ENCODE measurements at regions of chr7 and their contacts with region 1.

Region 1: GRCh38 chr7:25093268-25093826 is 31.7 kb downstream of the CYCS start:
- DNase-seq: peak; percentile 88
- H3K4me3 Mint-ChIP-seq: no peak overlapping the region
- H3K27ac Mint-ChIP-seq: no peak overlapping the region
- H3K4me1 Mint-ChIP-seq: peaks cover 14% of the 10 kb centered on the region
- H3K27me3 Mint-ChIP-seq: peaks cover 2% of the 10 kb centered on the region

Region 2: GRCh38 chr7:24290004-24290641 is 803.2 kb before region 1 on chr7:
- CTCF ChIA-PET with region 1: no interaction called
- POLR2A ChIA-PET with region 1: no interaction called
- intact Hi-C with region 1: loop called (anchors 5 kb)
- DNase-seq: peak; percentile 76
- H3K4me3 Mint-ChIP-seq: no peak overlapping the region
- H3K27ac Mint-ChIP-seq: no peak overlapping the region
- H3K4me1 Mint-ChIP-seq: peaks cover 14% of the 10 kb centered on the region
- H3K27me3 Mint-ChIP-seq: peaks cover 39% of the 10 kb centered on the region

Region 3: GRCh38 chr7:24504040-24504439 is 589.3 kb before region 1 on chr7:
- CTCF ChIA-PET with region 1: no interaction called
- POLR2A ChIA-PET with region 1: no interaction called
- intact Hi-C with region 1: no loop called
- DNase-seq: no peak
- H3K4me3 Mint-ChIP-seq: no peak overlapping the region
- H3K27ac Mint-ChIP-seq: no peak overlapping the region
- H3K4me1 Mint-ChIP-seq: no peaks in the 10 kb centered on the region
- H3K27me3 Mint-ChIP-seq: peaks cover 6% of the 10 kb centered on the region

Region 4: GRCh38 chr7:24715661-24716479 is 377.5 kb before region 1 on chr7:
- CTCF ChIA-PET with region 1: interaction called, 12 read pairs
- POLR2A ChIA-PET with region 1: no interaction called
- intact Hi-C with region 1: no loop called
- DNase-seq: no peak
- H3K4me3 Mint-ChIP-seq: no peak overlapping the region
- H3K27ac Mint-ChIP-seq: no peak overlapping the region
- H3K4me1 Mint-ChIP-seq: no peaks in the 10 kb centered on the region
- H3K27me3 Mint-ChIP-seq: peaks cover 17% of the 10 kb centered on the region

Region 5: DNA sequence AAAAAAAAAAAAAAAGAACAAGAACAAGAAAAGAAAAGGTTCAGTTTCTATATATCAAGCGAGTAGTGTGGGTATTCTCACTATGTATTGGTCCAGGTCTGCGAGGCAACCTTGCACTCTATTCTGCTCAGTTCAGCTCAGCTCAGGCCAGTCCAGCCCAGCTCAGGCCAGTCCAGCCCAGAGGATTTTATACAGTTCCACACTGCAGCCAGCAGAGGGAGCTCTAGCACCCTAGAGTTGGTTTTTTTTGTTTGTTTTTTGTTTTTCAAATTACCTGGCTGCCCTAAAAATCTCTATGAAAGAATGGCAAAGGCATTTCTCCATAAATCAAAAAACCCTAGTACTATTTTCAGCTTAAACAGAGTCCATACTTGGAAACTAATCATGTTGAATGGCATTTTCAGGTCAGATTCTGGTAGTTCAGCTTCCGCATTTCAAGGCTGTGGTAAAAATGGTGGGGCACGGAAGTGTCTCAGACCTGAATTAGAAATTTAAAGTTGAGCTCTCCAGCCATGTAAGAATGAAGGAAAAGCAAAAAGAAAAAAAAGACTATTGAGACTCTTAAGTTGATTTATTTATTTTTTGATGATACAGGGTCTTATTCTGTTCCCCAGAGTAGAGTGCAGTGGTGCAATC is 280.9 kb before region 1 on chr7:
- CTCF ChIA-PET with region 1: interaction called, 251 read pairs
- POLR2A ChIA-PET with region 1: no interaction called
- intact Hi-C with region 1: loop called (anchors 1 kb)
- DNase-seq: peak; percentile 58
- H3K4me3 Mint-ChIP-seq: no peak overlapping the region
- H3K27ac Mint-ChIP-seq: no peak overlapping the region
- H3K4me1 Mint-ChIP-seq: no peaks in the 10 kb centered on the region
- H3K27me3 Mint-ChIP-seq: no peaks in the 10 kb centered on the region

Region 6: DNA sequence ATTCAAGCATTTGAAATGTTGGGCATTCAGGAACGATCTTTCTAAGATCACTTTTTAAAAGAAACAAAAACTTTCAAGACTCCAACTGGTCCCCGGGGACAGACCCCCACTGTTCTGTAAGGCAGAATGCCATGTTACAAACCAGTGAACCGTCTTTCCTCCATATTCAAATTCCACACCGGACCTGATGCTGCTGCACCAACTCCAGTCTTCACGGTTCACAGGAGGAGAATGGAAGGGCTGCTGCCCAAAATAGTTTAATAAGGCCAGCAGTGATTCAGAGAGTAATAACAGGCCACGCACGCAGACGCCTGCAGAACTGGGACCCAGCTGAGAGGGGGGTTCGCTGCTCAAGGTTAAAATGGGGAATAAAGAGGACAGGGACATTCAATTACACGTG is 160.5 kb before region 1 on chr7:
- CTCF ChIA-PET with region 1: no interaction called
- POLR2A ChIA-PET with region 1: no interaction called
- intact Hi-C with region 1: no loop called
- DNase-seq: no peak
- H3K4me3 Mint-ChIP-seq: no peak overlapping the region
- H3K27ac Mint-ChIP-seq: no peak overlapping the region
- H3K4me1 Mint-ChIP-seq: peaks cover 58% of the 10 kb centered on the region
- H3K27me3 Mint-ChIP-seq: no peaks in the 10 kb centered on the region

Region 7: DNA sequence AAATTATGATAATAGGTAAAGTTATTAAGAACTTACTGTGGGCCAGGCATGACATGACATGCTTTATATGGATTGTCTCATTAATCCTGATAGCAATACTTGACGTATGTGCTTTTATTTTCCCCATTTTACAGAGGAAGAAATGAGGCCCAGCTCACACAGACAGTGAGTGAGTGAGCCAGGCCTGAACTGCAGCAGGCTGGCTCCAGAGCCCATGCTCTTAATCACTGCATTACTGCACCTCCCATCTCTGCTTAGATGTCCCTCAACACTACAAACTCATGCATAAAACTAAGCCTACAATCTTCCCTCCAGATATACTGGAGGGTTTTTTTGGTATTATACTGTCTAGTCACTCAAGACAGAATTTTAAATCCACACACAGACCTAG is 44.9 kb before region 1 on chr7:
- CTCF ChIA-PET with region 1: no interaction called
- POLR2A ChIA-PET with region 1: no interaction called
- intact Hi-C with region 1: no loop called
- DNase-seq: no peak
- H3K4me3 Mint-ChIP-seq: no peak overlapping the region
- H3K27ac Mint-ChIP-seq: no peak overlapping the region
- H3K4me1 Mint-ChIP-seq: no peaks in the 10 kb centered on the region
- H3K27me3 Mint-ChIP-seq: no peaks in the 10 kb centered on the region

Region 8: GRCh38 chr7:25069900-25070443 is 23.4 kb before region 1 on chr7:
- CTCF ChIA-PET with region 1: interaction called, 33 read pairs
- POLR2A ChIA-PET with region 1: no interaction called
- intact Hi-C with region 1: no loop called
- DNase-seq: peak; percentile 45
- H3K4me3 Mint-ChIP-seq: no peak overlapping the region
- H3K27ac Mint-ChIP-seq: no peak overlapping the region
- H3K4me1 Mint-ChIP-seq: peaks cover 26% of the 10 kb centered on the region
- H3K27me3 Mint-ChIP-seq: no peaks in the 10 kb centered on the region

Region 9: GRCh38 chr7:25158966-25159365 is 65.6 kb after region 1 on chr7:
- CTCF ChIA-PET with region 1: interaction called, 7 read pairs
- POLR2A ChIA-PET with region 1: no interaction called
- intact Hi-C with region 1: loop called (anchors 1 kb)
- DNase-seq: no peak
- H3K4me3 Mint-ChIP-seq: no peak overlapping the region
- H3K27ac Mint-ChIP-seq: no peak overlapping the region
- H3K4me1 Mint-ChIP-seq: peaks cover 2% of the 10 kb centered on the region
- H3K27me3 Mint-ChIP-seq: no peaks in the 10 kb centered on the region